AG04449 (cell line): ENCODE measurements at regions of chr7 and their contacts with region 1.

Region 1: GRCh38 chr7:82572195-82572880 is 128.8 kb upstream of the CACNA2D1 start:
- DNase-seq: peak; percentile 24
- H3K4me3 ChIP-seq: no peak overlapping the region
- CTCF ChIP-seq: peak; percentile 87

Region 2: GRCh38 chr7:81482600-81483186 is 1089.6 kb before region 1 on chr7:
- CTCF ChIA-PET with region 1: interaction called, 10 read pairs
- POLR2A ChIA-PET with region 1: no interaction called
- DNase-seq: no peak
- H3K4me3 ChIP-seq: no peak overlapping the region
- CTCF ChIP-seq: peak; percentile 3

Region 3: DNA sequence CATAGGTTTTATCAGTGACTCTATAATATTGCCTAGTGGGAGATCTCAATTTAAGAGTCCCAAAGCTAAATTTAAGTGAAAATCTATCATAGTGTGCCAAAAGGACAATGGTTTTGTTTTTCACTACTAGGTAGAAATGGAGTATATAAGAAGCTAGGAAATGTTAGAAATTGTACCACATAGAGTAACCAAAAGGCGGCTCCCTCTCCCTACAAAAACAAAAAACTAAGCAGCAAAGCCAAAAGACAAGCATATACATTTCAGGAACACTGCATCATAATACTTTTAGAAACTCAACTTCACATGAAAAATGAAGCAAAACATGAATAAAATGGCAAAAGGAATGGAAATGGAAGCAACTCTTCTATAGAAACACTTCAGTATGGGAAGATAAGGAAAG is 400.3 kb before region 1 on chr7:
- CTCF ChIA-PET with region 1: interaction called, 17 read pairs
- POLR2A ChIA-PET with region 1: no interaction called
- DNase-seq: no peak
- H3K4me3 ChIP-seq: no peak overlapping the region
- CTCF ChIP-seq: no peak

Region 4: GRCh38 chr7:82234457-82235049 is 337.8 kb before region 1 on chr7:
- CTCF ChIA-PET with region 1: interaction called, 17 read pairs
- POLR2A ChIA-PET with region 1: no interaction called
- DNase-seq: no peak
- H3K4me3 ChIP-seq: no peak overlapping the region
- CTCF ChIP-seq: peak; percentile 27

Region 5: GRCh38 chr7:82559193-82559805 is 13.0 kb before region 1 on chr7:
- CTCF ChIA-PET with region 1: interaction called, 14 read pairs
- POLR2A ChIA-PET with region 1: no interaction called
- DNase-seq: no peak
- H3K4me3 ChIP-seq: no peak overlapping the region
- CTCF ChIP-seq: no peak